ENCODE measurements at regions of chr1 and their contacts with region 1.

Region 1: DNA sequence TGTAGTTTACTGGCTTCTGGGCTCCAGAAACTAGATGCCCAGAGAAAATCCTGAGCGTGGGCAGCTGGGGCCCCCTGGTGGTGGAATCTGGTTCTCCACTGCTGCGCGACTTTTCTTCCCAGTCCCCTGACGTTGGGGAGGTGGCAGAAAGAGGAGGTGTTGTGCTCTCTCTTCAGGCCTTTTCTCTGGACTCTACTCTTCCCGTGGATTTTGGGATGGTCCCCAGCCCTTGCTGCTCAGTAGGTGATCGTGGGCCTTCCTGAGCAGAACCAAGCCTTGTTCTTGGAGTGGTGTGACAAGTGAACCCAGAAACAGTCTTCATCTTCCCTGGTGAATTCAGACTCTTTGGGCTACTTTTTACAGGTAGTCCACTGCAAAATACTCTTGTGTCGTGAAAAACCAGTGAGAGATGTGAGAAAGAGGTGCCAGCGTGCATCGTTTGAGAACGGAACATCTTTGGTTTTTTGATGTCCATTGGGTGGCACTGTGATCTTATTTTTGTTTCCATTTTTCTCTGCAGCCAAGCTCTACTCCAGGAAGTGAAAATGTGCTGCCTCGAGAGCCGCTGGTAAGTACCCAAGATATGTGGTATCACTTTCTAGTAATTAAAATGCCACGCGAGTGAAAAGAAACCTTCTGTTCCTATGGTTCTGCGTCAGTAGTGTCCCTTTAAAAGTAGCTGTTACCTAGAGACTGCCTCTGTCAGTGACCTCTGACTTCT is 20.2 kb downstream of the PEX14 start:
- DNase-seq: peak; percentile 88
- ATAC-seq: peak; percentile 96
- H3K4me3 ChIP-seq: peak overlapping the region; percentile 56
- H3K27ac ChIP-seq: peak overlapping the region; percentile 83
- H3K4me1 ChIP-seq: peaks cover 25% of the 10 kb centered on the region
- H3K27me3 ChIP-seq: no peaks in the 10 kb centered on the region
- CTCF ChIP-seq: peak; percentile 88 to 93 (median 92)
- EP300 ChIP-seq: peak; percentile 38 to 61; a peak in 1 of 4 replicates
- POLR2A ChIP-seq: no peak
- RAD21 ChIP-seq: peak; percentile 82

Region 2: GRCh38 chr1:9874959-9875635 is 619.8 kb before region 1 on chr1:
- CTCF ChIA-PET with region 1: interaction called, 4 read pairs
- POLR2A ChIA-PET with region 1: no interaction called
- RAD21 ChIA-PET with region 1: no interaction called
- SMC1A ChIA-PET with region 1: interaction called, 4 read pairs
- in situ Hi-C with region 1: no loop called
- intact Hi-C with region 1: loop called (anchors 5 kb)
- DNase-seq: peak; percentile 20
- ATAC-seq: peak; percentile 97
- H3K4me3 ChIP-seq: no peak overlapping the region
- H3K27ac ChIP-seq: no peak overlapping the region
- H3K4me1 ChIP-seq: 0 out of 2 replicates have a peak, but pooled peaks cover 4% of the 10 kb centered on the region
- H3K27me3 ChIP-seq: no peaks in the 10 kb centered on the region
- CTCF ChIP-seq: peak; percentile 92 to 98 (median 94); a peak in 5 of 6 replicates
- EP300 ChIP-seq: no peak
- POLR2A ChIP-seq: no peak
- RAD21 ChIP-seq: peak; percentile 95

Region 3: DNA sequence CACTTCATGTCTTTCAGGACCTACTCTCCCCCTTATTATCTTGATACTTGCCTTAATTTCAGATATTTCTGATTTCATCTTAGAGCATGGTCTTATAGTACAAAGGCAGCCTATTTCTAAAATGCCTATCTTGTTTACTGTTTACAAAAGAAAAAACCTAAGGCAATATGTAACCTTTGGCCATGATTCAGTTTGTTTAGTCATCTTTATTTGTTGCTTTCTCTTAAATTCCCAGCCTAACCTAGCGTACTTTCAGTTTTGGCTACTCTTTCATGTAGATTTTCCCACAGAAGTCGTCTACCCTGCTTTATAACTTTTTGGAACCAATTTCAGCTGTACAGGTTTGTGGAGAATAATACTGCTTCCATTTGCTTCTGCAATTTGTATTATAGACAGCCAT is 202.7 kb before region 1 on chr1:
- CTCF ChIA-PET with region 1: no interaction called
- POLR2A ChIA-PET with region 1: no interaction called
- RAD21 ChIA-PET with region 1: no interaction called
- SMC1A ChIA-PET with region 1: no interaction called
- in situ Hi-C with region 1: no loop called
- intact Hi-C with region 1: no loop called
- DNase-seq: no peak
- ATAC-seq: no peak
- H3K4me3 ChIP-seq: no peak overlapping the region
- H3K27ac ChIP-seq: no peak overlapping the region
- H3K4me1 ChIP-seq: no peaks in the 10 kb centered on the region
- H3K27me3 ChIP-seq: no peaks in the 10 kb centered on the region
- CTCF ChIP-seq: no peak
- EP300 ChIP-seq: no peak
- POLR2A ChIP-seq: no peak
- RAD21 ChIP-seq: no peak

Region 4: DNA sequence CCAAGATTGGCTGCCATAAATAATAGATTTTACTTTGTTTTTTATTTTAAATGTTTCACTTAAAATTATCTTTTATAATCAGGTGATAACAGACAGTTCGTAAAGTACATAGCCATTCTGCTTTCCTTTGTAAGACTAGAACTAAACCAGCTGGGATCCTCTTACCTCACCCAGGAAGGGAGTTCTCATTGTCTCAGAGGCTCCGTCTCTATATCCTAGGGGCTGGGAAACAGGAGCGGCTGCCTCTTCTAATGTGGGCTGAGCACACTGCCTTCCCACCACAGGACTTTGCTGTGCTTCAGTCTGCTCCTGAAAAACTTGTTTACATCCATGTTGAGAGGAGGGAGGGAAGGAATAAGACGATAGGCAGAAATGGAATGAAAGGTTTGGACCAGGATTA is 141.6 kb before region 1 on chr1:
- CTCF ChIA-PET with region 1: no interaction called
- POLR2A ChIA-PET with region 1: no interaction called
- RAD21 ChIA-PET with region 1: no interaction called
- SMC1A ChIA-PET with region 1: no interaction called
- in situ Hi-C with region 1: no loop called
- intact Hi-C with region 1: no loop called
- DNase-seq: no peak
- ATAC-seq: no peak
- H3K4me3 ChIP-seq: no peak overlapping the region
- H3K27ac ChIP-seq: no peak overlapping the region
- H3K4me1 ChIP-seq: no peaks in the 10 kb centered on the region
- H3K27me3 ChIP-seq: no peaks in the 10 kb centered on the region
- CTCF ChIP-seq: no peak
- EP300 ChIP-seq: no peak
- POLR2A ChIP-seq: no peak
- RAD21 ChIP-seq: no peak

Region 5: GRCh38 chr1:10444795-10445397 is 50.0 kb before region 1 on chr1:
- CTCF ChIA-PET with region 1: interaction called, 16 read pairs
- POLR2A ChIA-PET with region 1: no interaction called
- RAD21 ChIA-PET with region 1: interaction called, 6 read pairs
- SMC1A ChIA-PET with region 1: interaction called, 3 read pairs
- in situ Hi-C with region 1: no loop called
- intact Hi-C with region 1: no loop called
- DNase-seq: no peak
- ATAC-seq: no peak
- H3K4me3 ChIP-seq: no peak overlapping the region
- H3K27ac ChIP-seq: no peak overlapping the region
- H3K4me1 ChIP-seq: no peaks in the 10 kb centered on the region
- H3K27me3 ChIP-seq: no peaks in the 10 kb centered on the region
- CTCF ChIP-seq: no peak
- EP300 ChIP-seq: no peak
- POLR2A ChIP-seq: no peak
- RAD21 ChIP-seq: no peak

Region 6: GRCh38 chr1:10484521-10484920 is 10.4 kb before region 1 on chr1:
- CTCF ChIA-PET with region 1: interaction called, 19 read pairs
- POLR2A ChIA-PET with region 1: interaction called, 4 read pairs
- RAD21 ChIA-PET with region 1: no interaction called
- SMC1A ChIA-PET with region 1: interaction called, 12 read pairs
- in situ Hi-C with region 1: no loop called
- intact Hi-C with region 1: no loop called
- DNase-seq: no peak
- ATAC-seq: no peak
- H3K4me3 ChIP-seq: no peak overlapping the region
- H3K27ac ChIP-seq: no peak overlapping the region
- H3K4me1 ChIP-seq: no peaks in the 10 kb centered on the region
- H3K27me3 ChIP-seq: no peaks in the 10 kb centered on the region
- CTCF ChIP-seq: no peak
- EP300 ChIP-seq: no peak
- POLR2A ChIP-seq: no peak
- RAD21 ChIP-seq: no peak

Region 7: GRCh38 chr1:10867138-10867721 is 372.3 kb after region 1 on chr1:
- CTCF ChIA-PET with region 1: interaction called, 21 read pairs
- POLR2A ChIA-PET with region 1: no interaction called
- RAD21 ChIA-PET with region 1: interaction called, 9 read pairs
- SMC1A ChIA-PET with region 1: interaction called, 7 read pairs
- in situ Hi-C with region 1: no loop called
- intact Hi-C with region 1: no loop called
- DNase-seq: no peak
- ATAC-seq: peak; percentile 96
- H3K4me3 ChIP-seq: peak overlapping the region; percentile 20; the same call in 1 of the 2 replicates
- H3K27ac ChIP-seq: no peak overlapping the region
- H3K4me1 ChIP-seq: 0 out of 2 replicates have a peak, but pooled peaks cover 5% of the 10 kb centered on the region
- H3K27me3 ChIP-seq: peaks cover 2 to 6% of the 10 kb centered on the region in 2 experiments; a peak in 3 of 4 replicates
- CTCF ChIP-seq: peak; percentile 41 to 68 (median 51); a peak in 5 of 6 replicates
- EP300 ChIP-seq: no peak
- POLR2A ChIP-seq: no peak
- RAD21 ChIP-seq: peak; percentile 67

Measured in GM12878 (cell line).